ENCODE measurements at regions of chr3 and their contacts with region 1.

Region 1: DNA sequence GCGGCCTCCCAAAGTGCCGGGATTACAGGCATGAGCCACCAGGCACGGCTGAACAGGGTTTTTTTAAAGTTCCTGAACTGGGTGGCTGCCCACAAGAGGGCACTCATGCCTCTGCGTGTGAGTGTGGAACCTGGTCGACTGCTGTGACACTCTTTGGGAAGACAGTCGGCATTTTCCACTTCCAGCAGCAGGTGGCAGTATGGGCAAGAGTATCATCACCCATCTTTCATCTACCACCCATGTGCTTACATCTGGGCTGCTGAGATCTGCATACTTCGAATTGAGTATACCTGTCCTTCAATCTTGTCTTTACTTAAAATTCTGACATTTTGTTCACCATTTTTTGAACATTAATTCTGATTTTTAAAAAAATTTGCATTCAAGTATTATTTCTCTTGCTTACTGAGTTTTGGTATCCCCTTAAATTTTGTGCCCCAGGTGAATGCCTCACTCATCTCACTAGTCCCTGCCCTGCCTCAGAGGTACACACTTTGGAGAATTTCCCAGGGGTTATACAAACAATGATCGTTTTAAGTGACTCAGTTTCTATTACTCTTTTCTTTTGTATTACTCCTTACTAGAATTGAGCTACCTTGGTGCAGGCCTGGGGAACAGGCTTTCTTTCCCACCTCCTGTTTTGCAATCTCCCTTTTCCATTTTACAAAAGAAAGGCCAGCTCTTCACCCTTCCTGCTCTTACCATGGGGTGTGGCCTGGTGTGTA is 11.8 kb downstream of the CLEC3B start:
- DNase-seq: peak; percentile 90
- ATAC-seq: peak; percentile 74

Region 2: DNA sequence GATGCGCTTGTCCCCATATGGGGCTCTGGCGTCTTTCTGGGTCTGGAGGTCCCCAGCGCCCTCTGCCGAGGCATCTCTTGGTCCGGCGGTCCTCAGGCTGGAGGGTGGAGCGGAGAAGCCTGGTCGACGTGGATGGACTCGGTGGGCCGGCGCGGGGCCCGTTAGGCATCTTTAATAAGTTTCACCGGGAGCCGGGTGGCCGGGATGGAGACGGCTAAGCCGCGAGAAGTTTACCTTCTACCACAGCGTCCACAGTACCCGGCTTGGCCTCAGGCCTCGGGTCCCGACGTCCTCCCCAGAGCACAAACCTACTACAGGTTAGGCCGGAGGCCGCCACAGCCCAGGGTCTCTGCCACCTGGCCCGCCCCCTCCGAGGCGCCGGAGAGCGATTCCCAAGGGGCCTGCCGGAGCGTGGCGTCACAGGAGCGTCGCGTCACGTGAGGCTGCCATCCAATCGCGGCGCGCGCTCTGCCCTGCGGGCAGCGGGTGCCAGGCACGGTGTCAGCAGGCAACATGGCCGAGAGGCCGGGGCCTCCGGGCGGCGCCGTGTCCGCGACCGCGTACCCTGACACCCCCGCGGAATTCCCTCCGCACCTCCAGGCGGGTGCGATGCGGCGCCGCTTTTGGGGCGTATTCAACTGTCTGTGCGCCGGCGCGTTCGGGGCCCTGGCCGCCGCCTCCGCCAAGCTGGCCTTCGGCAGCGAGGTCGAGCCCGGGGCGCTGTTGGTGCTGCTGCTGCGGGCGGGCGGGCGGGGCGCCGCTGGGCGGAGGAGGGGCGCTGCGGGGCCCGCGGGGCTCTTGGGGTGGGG is 176.3 kb before region 1 on chr3 and contains the start of gene TMEM42:
- intact Hi-C with region 1: loop called (anchors 10 kb)
- DNase-seq: peak; percentile 96
- ATAC-seq: peak; percentile 98
- total RNA-seq, gene TMEM42: 8.8 TPM

Region 3: DNA sequence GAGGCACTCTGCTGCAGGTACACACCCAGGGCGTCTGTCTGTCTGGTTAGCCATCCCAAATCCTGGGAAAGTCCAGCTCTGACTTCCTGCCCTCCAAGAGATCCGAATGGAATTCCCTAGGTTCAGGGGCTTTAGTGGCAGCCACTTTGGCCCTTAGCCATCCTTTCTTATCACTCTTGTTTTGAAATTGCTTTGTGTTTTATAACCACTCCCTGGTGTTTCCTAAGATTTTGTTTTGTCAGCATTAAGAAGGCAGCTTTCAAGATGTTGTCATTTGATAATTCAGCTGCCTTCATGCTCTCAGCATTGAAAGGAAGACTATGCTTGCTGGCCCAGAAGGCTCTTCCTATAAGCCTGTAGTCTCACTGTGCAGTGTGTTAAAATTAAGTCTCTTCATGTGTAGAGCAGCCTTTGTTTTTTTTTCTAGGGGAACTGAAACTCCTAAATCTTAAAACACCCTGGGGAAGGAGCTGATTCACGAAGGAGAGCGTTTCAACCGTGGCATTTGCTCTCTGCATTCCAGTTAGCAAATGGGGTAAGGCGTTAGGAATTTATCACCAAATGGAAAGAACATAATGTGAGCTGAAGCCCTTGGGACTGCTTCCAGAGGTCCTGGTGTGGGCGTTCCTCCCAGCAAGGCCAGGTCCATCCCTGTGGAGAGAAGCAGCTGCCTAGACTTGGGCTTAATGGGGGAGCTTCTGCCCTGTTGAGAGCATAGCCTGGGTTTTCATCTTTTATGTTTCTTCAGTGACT is 26.0 kb before region 1 on chr3:
- intact Hi-C with region 1: loop called (anchors 1 kb)
- DNase-seq: peak; percentile 80
- ATAC-seq: peak; percentile 90

Region 4: GRCh38 chr3:45210308-45211041 is 172.6 kb after region 1 on chr3:
- intact Hi-C with region 1: loop called (anchors 1 kb)
- DNase-seq: peak; percentile 92
- ATAC-seq: peak; percentile 91

Region 5: DNA sequence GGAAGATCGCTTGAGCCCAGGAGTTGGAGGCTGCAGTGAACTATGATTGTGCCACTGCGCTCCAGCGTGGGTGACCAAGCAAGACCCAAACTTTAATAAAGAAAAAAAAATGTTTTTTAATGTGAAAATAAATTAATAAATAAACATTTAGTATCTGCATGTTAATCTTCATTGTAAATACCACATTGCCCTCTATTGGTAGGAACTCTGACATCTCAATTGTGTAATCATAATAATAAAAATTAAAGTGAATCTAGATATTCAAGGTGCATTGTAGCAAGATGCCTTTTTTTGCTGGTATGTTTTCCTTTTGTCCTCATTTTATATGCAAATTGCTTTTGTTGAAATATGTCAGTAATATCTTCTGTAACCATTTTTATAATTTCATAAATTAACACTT is 461.6 kb after region 1 on chr3:
- intact Hi-C with region 1: loop called (anchors 5 kb)
- DNase-seq: no peak
- ATAC-seq: no peak

Region 6: DNA sequence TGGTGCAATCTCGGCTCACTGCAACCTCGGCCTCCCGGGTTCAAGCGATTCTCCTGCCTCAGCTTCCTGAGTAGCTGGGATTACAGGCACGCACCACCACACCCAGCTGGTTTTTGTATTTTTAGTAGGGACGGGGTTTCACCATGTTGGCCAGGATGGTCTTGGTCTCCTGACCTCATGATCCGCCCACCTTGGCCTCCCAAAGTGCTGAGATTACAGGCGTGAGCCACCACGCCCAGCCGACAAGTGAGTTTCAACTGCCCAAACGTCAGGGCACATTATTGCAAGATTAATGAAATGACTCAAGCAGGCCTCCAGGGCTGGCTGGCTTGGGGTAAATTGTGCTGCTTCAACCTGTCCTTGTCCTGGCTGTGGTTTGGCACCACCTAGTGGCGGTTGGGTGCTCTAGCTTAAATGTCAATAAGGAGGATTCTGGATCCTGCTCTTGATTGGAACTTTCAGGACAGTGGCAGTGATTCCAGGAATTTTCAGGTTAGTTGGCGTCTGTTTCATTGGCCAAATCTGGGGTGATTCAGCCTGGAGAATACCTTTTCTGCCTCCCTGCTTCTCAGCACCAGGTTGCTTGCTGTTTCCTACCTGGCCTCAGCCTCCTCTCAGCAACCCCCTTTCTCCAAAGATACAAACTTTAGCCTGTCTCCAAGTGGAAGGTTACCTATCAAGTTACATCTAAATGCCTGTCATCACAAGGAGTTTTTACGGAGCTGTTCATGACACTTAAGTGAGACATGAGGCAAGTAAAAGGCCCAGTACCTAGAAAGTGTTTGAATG is 618.9 kb after region 1 on chr3:
- intact Hi-C with region 1: loop called (anchors 10 kb)
- DNase-seq: peak; percentile 95
- ATAC-seq: peak; percentile 88